Transverse colon (tissue), 4 donors: ENCODE measurements at regions of chr2 and their contacts with region 1.

Region 1: GRCh38 chr2:176088048-176088936 is 4.2 kb upstream of the HOXD13 start:
- DNase-seq: peak; percentile 59
- H3K4me3 ChIP-seq: peak overlapping the region in 2 of 4 donors; percentile 15 to 48
- H3K27ac ChIP-seq: no peak overlapping the region
- H3K4me1 ChIP-seq: peaks cover 3 to 39% (median 26%) of the 10 kb centered on the region in 4 donors
- H3K27me3 ChIP-seq: peaks cover 100% of the 10 kb centered on the region
- CTCF ChIP-seq: peak; percentile 67 to 79 (median 73)
- EP300 ChIP-seq: no peak
- POLR2A ChIP-seq: no peak

Region 2: GRCh38 chr2:175251425-175252041 is 836.8 kb before region 1 on chr2:
- in situ Hi-C with region 1: no loop called
- intact Hi-C with region 1: loop called (anchors 10 kb)
- DNase-seq: no peak
- H3K4me3 ChIP-seq: no peak overlapping the region
- H3K27ac ChIP-seq: no peak overlapping the region
- H3K4me1 ChIP-seq: no peaks in the 10 kb centered on the region
- H3K27me3 ChIP-seq: peaks cover 10% of the 10 kb centered on the region
- CTCF ChIP-seq: peak in 4 of 5 experiments; percentile 45 to 53 (median 50)
- EP300 ChIP-seq: no peak
- POLR2A ChIP-seq: no peak

Region 3: GRCh38 chr2:175579646-175580045 is 508.6 kb before region 1 on chr2:
- in situ Hi-C with region 1: no loop called
- intact Hi-C with region 1: loop called (anchors 10 kb)
- DNase-seq: no peak
- H3K4me3 ChIP-seq: no peak overlapping the region
- H3K27ac ChIP-seq: no peak overlapping the region
- H3K4me1 ChIP-seq: no peaks in the 10 kb centered on the region
- H3K27me3 ChIP-seq: no peaks in the 10 kb centered on the region
- CTCF ChIP-seq: no peak
- EP300 ChIP-seq: no peak
- POLR2A ChIP-seq: no peak

Region 4: GRCh38 chr2:175662335-175662734 is 426.0 kb before region 1 on chr2:
- in situ Hi-C with region 1: no loop called
- intact Hi-C with region 1: no loop called
- DNase-seq: no peak
- H3K4me3 ChIP-seq: no peak overlapping the region
- H3K27ac ChIP-seq: no peak overlapping the region
- H3K4me1 ChIP-seq: no peaks in the 10 kb centered on the region
- H3K27me3 ChIP-seq: peaks cover 8% of the 10 kb centered on the region
- CTCF ChIP-seq: no peak
- EP300 ChIP-seq: no peak
- POLR2A ChIP-seq: no peak

Region 5: GRCh38 chr2:175690113-175690837 is 398.0 kb before region 1 on chr2:
- in situ Hi-C with region 1: loop called in 2 of 4 experiments (anchors 10 to 25 kb)
- intact Hi-C with region 1: loop called (anchors 5 kb)
- DNase-seq: peak; percentile 24
- H3K4me3 ChIP-seq: no peak overlapping the region
- H3K27ac ChIP-seq: no peak overlapping the region
- H3K4me1 ChIP-seq: no peaks in the 10 kb centered on the region
- H3K27me3 ChIP-seq: peaks cover 47% of the 10 kb centered on the region
- CTCF ChIP-seq: peak; percentile 70 to 76 (median 72)
- EP300 ChIP-seq: no peak
- POLR2A ChIP-seq: no peak